Ovary (tissue), 10 donors: ENCODE measurements at regions of chr6 and their contacts with region 1.

Region 1: DNA sequence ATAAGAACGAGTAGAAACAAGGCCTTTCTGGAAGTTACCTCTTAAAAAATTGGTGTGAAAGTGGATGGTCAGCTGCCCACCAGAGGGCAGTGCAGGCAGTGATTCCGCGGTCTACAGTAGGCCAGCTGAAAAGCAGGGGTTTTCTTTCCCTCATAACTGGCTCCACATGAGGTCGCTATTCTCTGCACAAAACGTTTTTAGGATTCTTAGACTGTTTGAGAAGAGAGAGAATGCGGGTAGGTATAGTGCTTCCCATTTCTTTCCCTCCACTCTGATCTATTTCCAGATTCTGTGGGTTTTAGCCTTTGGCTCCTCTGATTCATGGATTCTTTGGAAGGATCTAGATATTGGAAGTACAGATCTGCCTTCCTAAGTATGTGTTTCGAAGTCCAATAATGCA is 14.2 kb downstream of the FIG4 start:
- DNase-seq: peak; percentile 72 to 88 (median 85)
- H3K4me3 ChIP-seq: no peak overlapping the region
- H3K27ac ChIP-seq: no peak overlapping the region
- H3K4me1 ChIP-seq: peaks cover 2% of the 10 kb centered on the region
- H3K27me3 ChIP-seq: no peaks in the 10 kb centered on the region
- CTCF ChIP-seq: peak; percentile 92 to 97 (median 95)
- EP300 ChIP-seq: no peak
- POLR2A ChIP-seq: no peak

Region 2: DNA sequence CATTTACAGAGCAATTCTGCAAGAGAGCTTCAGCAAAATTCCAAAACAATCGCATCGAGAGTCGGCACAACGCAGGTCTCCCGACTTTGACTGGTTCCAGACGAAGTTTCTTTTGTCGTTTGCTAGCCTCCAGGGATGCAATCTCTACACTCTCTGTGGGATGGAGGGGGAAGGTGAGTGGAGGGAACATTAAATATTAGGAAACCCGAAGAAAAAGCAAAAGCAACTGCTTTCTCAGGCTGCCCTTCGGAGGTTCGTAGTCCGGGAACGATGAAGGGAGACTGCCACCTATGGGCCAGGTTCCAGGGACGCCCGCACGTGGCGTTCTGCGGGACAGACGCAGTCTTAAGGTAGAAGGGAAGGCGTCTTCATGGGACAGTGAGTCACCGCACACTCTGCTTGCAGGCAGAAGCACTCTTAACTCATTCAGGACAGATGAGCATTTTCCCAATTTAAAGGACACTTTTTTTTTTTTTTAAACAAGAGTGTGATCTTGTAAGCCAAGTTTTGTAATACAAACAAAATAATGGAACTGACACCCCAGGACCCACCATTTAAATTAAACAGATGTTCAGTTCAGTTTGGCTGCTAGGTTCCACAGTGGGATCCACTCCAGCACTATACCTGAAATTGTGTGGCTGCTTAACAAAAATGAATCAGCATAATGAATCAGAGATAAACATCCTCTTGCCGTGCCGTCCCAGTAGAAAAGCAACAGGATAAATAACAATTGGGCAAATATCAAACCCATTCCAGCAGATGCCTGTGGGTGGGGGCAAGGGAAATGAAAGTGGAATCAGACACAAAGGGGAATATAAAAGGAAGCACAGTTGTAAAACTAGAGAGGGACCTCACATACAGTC is 922.8 kb before region 1 on chr6:
- intact Hi-C with region 1: loop called in 1 of 4 experiments (anchors 5 kb)
- DNase-seq: peak; percentile 83 to 88 (median 86)
- H3K4me3 ChIP-seq: peak overlapping the region; percentile 28
- H3K27ac ChIP-seq: no peak overlapping the region
- H3K4me1 ChIP-seq: no peaks in the 10 kb centered on the region
- H3K27me3 ChIP-seq: no peaks in the 10 kb centered on the region
- CTCF ChIP-seq: peak; percentile 23 to 73 (median 71)
- EP300 ChIP-seq: no peak
- POLR2A ChIP-seq: no peak

Region 3: GRCh38 chr6:110039364-110039980 is 334.2 kb after region 1 on chr6:
- intact Hi-C with region 1: loop called (anchors 2 to 5 kb)
- DNase-seq: peak; percentile 79 to 92 (median 87)
- H3K4me3 ChIP-seq: peak overlapping the region; percentile 7
- H3K27ac ChIP-seq: peak overlapping the region in 1 of 2 donors; percentile 9
- H3K4me1 ChIP-seq: no peaks in the 10 kb centered on the region
- H3K27me3 ChIP-seq: no peaks in the 10 kb centered on the region
- CTCF ChIP-seq: peak; percentile 71 to 78 (median 78)
- EP300 ChIP-seq: no peak
- POLR2A ChIP-seq: no peak

Region 4: GRCh38 chr6:110053395-110054240 is 348.4 kb after region 1 on chr6:
- intact Hi-C with region 1: loop called in 1 of 4 experiments (anchors 5 kb)
- DNase-seq: peak in 2 of 5 donors; percentile 23 to 53
- H3K4me3 ChIP-seq: no peak overlapping the region
- H3K27ac ChIP-seq: no peak overlapping the region
- H3K4me1 ChIP-seq: no peaks in the 10 kb centered on the region
- H3K27me3 ChIP-seq: no peaks in the 10 kb centered on the region
- CTCF ChIP-seq: peak; percentile 45 to 81 (median 58)
- EP300 ChIP-seq: no peak
- POLR2A ChIP-seq: no peak

Region 5: GRCh38 chr6:110179401-110180227 is 474.4 kb after region 1 on chr6 and contains the start of gene WASF1:
- intact Hi-C with region 1: loop called in 1 of 4 experiments (anchors 5 kb)
- DNase-seq: peak; percentile 93 to 98 (median 97)
- H3K4me3 ChIP-seq: peak within 1 kb of the TSS; percentile 75
- H3K27ac ChIP-seq: peak within 1 kb of the TSS; percentile 86 to 88
- H3K4me1 ChIP-seq: peaks cover 10% of the 10 kb centered on the region
- H3K27me3 ChIP-seq: no peaks in the 10 kb centered on the region
- CTCF ChIP-seq: peak in 1 of 3 donors; percentile 19
- EP300 ChIP-seq: no peak
- POLR2A ChIP-seq: peak; percentile 49
- total RNA-seq, gene WASF1: 16.1 to 37.2 (median 22.0) TPM

Region 6: GRCh38 chr6:110389689-110390382 is 684.6 kb after region 1 on chr6:
- intact Hi-C with region 1: loop called in 1 of 4 experiments (anchors 5 kb)
- DNase-seq: no peak
- H3K4me3 ChIP-seq: no peak overlapping the region
- H3K27ac ChIP-seq: no peak overlapping the region
- H3K4me1 ChIP-seq: peaks cover 3% of the 10 kb centered on the region
- H3K27me3 ChIP-seq: no peaks in the 10 kb centered on the region
- CTCF ChIP-seq: no peak
- EP300 ChIP-seq: no peak
- POLR2A ChIP-seq: no peak